ENCODE measurements at regions of chr12 and their contacts with region 1.

Region 1: GRCh38 chr12:12032851-12033588 is 37.7 kb upstream of the BCL2L14 start:
- DNase-seq: peak; percentile 82 to 95
- H3K4me3 ChIP-seq: peak overlapping the region; percentile 36 to 42 (median 40)
- H3K27ac ChIP-seq: peak overlapping the region; percentile 57 to 80 (median 77)
- H3K4me1 ChIP-seq: peaks cover 8 to 33% (median 11%) of the 10 kb centered on the region in 4 donors
- H3K27me3 ChIP-seq: no peaks in the 10 kb centered on the region
- CTCF ChIP-seq: peak in 5 of 7 experiments; percentile 60 to 89 (median 83)
- EP300 ChIP-seq: no peak
- POLR2A ChIP-seq: no peak

Region 2: DNA sequence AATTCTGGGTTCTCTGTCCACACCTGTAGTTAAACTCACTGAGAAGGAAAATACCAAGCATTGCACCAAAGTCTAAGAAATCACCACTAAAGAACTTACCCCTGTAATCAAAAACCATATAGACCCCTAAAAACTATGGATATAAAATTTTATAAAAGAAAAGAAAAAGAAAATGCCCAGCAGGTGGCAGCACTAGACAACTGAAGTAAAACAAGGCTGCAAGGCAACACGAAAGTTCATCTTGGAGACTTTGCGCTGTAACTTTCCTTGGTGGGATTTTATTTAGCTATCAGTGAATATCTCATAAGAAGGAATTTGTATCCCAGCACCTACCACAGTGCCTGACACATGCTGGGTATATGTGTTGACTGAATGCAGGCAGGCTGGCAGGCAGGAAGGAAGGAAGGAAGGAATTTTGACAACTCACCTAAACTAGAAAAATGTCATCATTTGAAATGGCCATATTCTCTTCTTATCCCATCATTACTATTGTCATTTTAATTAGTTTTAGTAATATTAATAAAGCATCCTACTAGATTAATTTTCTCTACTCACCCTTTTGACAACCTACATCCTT is 451.8 kb before region 1 on chr12:
- intact Hi-C with region 1: loop called (anchors 5 kb)
- DNase-seq: peak; percentile 72 to 89
- H3K4me3 ChIP-seq: no peak overlapping the region
- H3K27ac ChIP-seq: peak overlapping the region in 2 of 5 donors; percentile 58 to 63
- H3K4me1 ChIP-seq: peaks cover 7 to 23% (median 15%) of the 10 kb centered on the region in 4 donors
- H3K27me3 ChIP-seq: no peaks in the 10 kb centered on the region
- CTCF ChIP-seq: peak in 4 of 7 experiments; percentile 56 to 72 (median 62)
- EP300 ChIP-seq: no peak
- POLR2A ChIP-seq: no peak

Region 3: GRCh38 chr12:11981121-11981733 is 51.8 kb before region 1 on chr12:
- intact Hi-C with region 1: no loop called
- DNase-seq: peak in 1 of 2 donors; percentile 38
- H3K4me3 ChIP-seq: no peak overlapping the region
- H3K27ac ChIP-seq: no peak overlapping the region
- H3K4me1 ChIP-seq: no peaks in the 10 kb centered on the region
- H3K27me3 ChIP-seq: no peaks in the 10 kb centered on the region
- CTCF ChIP-seq: no peak
- EP300 ChIP-seq: no peak
- POLR2A ChIP-seq: no peak

Measured in stomach (tissue), 19 donors.